Motor neuron (in vitro differentiated cells): ENCODE measurements at regions of chr12 and their contacts with region 1.

Region 1: DNA sequence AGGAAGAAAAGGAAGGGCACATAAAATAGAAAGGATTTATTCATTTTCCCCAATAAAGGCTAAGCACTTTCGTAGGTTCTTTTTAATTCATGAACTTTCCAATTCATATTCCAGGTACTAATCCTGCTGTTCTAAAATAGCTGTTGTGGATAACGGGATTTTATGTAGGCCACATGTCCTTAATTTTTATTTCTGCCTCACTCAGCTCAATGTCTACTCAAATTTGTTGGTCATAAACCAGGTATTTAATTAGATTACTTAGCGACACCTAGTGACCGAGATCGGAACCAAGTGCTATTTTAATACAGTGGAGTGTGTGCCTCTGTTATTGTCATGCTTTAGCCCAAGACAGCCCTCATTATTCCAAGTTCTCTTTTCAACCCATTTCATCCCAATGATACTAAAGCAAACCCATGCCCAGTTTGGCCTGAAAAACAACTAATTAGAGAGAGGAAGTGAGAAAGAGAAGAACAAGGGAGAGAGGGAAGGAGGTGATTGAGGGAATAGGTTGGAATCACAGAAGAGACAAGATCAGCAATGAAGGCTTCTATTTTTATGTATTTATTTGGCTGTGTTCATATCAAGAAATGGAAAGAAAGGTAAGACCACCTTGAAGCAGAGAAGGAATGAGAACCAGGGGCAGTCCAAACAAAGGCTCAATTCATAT is 45.9 kb upstream of the IFNG-AS1 start:
- ATAC-seq: peak; percentile 79 to 97 (median 88)
- H3K4me3 ChIP-seq: no peak overlapping the region
- H3K27ac ChIP-seq: no peak overlapping the region
- H3K4me1 ChIP-seq: peaks cover 3 to 8% of the 10 kb centered on the region in 2 donors

Region 2: DNA sequence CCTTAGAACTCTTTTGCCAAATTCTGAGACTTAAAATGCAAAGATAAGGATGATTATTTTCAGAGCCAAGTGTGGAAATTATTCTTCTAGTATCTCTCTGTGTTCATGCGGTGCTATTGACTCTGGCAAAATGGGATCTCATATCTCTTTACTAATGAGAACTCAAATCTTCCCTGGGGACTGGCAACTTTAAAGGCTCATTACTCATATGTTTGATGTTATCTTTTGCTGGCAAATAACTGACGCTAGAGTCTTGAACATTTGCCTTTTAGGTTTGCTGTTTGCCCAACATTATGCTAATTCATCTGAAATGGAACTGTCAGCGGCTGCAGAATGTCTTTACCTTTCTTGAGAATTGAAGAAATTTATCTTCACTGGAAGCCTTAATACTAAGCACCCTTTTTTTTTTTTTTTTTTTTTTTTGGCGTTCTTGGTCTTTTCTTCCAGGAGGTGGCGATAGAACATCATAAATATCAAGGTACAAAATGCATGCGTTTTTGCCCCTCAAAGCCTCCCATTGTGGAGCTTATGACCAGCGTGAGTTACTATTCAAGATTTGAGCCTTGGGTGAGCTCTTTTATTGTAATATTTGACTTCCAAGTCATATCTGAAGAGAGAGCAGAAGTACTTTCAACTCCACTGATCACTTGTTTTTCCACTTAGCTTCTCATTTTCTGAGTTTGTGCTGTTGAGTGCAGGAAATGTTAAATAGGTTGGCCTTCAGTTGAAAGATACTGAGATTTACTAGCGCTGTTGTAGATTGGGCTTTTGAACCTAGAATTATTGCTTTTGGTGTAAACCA is 587.6 kb before region 1 on chr12:
- in situ Hi-C with region 1: loop called in 5 of 9 experiments (anchors 25 kb)
- ATAC-seq: peak; percentile 7 to 76 (median 63)
- H3K4me3 ChIP-seq: no peak overlapping the region
- H3K27ac ChIP-seq: no peak overlapping the region
- H3K4me1 ChIP-seq: peaks cover 0 to 8% of the 10 kb centered on the region in 2 donors

Region 3: GRCh38 chr12:67441736-67442346 is 501.5 kb before region 1 on chr12:
- in situ Hi-C with region 1: loop called in 1 of 9 experiments (anchors 25 kb)
- ATAC-seq: peak; percentile 86 to 100 (median 94)
- H3K4me3 ChIP-seq: no peak overlapping the region
- H3K27ac ChIP-seq: no peak overlapping the region
- H3K4me1 ChIP-seq: no peaks in the 10 kb centered on the region

Region 4: GRCh38 chr12:67648521-67649260 is 294.7 kb before region 1 on chr12 and contains the start of gene DYRK2:
- in situ Hi-C with region 1: loop called in 3 of 9 experiments (anchors 25 kb)
- ATAC-seq: peak; percentile 38 to 76 (median 68)
- H3K4me3 ChIP-seq: peak within 1 kb of the TSS; percentile 89 to 100 (median 97)
- H3K27ac ChIP-seq: peak within 1 kb of the TSS; percentile 88 to 93
- H3K4me1 ChIP-seq: peaks cover 4 to 11% of the 10 kb centered on the region in 2 donors
- total RNA-seq, gene DYRK2: 11.1 to 34.4 (median 18.8) TPM